ENCODE measurements at regions of chr6 and their contacts with region 1.

Region 1: DNA sequence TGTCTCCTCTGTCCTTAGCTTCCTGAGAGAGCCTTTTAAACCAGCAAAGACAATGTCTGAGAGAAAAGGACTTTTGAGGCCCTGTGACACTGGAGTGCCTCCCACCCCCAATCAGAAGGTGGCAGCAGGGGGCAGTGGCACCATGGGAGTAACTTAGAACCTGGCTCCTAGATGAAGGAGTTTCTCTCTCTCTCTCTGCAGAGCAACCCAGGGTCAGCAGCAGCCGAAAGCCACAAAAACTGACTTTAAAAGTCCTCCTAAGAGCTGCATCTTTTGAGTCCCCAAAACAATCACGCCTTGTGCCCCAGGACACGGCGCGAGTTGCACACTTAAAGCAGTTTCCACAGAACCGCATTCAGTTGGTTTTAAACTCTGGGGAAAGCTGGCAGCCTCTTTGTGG is 5.3 kb upstream of the TCP11 start:
- DNase-seq: peak in 1 of 2 experiments; percentile 52
- H3K4me3 ChIP-seq: no peak overlapping the region
- H3K27ac ChIP-seq: no peak overlapping the region
- H3K4me1 ChIP-seq: peaks cover 14% of the 10 kb centered on the region
- H3K27me3 ChIP-seq: no peaks in the 10 kb centered on the region
- CTCF ChIP-seq: peak; percentile 74

Region 2: GRCh38 chr6:35202066-35202546 is 55.7 kb after region 1 on chr6:
- CTCF ChIA-PET with region 1: interaction called, 14 read pairs
- POLR2A ChIA-PET with region 1: interaction called, 3 read pairs
- intact Hi-C with region 1: loop called (anchors 1 kb)
- DNase-seq: no peak
- H3K4me3 ChIP-seq: no peak overlapping the region
- H3K27ac ChIP-seq: no peak overlapping the region
- H3K4me1 ChIP-seq: peaks cover 17% of the 10 kb centered on the region
- H3K27me3 ChIP-seq: 0 out of 2 replicates have a peak, but pooled peaks cover 7% of the 10 kb centered on the region
- CTCF ChIP-seq: no peak

Region 3: DNA sequence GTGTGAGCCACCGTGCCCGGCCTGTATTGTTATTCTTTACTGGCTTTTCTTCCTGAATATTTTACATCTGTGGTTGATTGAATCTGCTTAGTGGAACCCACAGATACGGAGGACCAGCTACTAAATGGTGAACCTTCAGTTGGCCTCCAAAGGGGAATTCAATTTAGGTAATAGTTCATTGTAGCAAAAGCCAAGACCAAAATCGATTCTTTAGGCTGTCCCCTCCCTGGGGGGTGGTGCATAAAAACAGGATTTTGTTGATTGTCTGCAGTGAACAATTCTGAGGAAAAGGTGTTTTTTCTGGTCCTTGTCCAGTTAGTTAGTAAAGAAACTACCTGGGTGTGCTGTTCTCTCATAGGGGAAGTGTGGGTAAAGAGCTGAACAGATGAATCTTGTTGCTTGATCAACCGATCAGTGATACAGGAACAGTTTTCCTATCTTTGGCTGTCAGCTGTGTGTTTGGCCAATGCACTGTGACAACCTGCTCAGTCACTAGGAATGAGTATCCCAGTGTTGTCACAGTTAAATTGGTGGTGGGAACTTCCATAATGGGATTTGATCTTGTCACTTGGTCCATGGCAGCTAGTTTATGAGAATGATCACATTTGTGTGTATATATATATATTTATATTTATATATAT is 678.2 kb after region 1 on chr6:
- CTCF ChIA-PET with region 1: no interaction called
- POLR2A ChIA-PET with region 1: no interaction called
- intact Hi-C with region 1: no loop called
- DNase-seq: no peak
- H3K4me3 ChIP-seq: no peak overlapping the region
- H3K27ac ChIP-seq: no peak overlapping the region
- H3K4me1 ChIP-seq: peaks cover 8% of the 10 kb centered on the region; the same call in 1 of the 2 replicates
- H3K27me3 ChIP-seq: no peaks in the 10 kb centered on the region
- CTCF ChIP-seq: no peak